Activated B cell treated with CpG ODN at 0.5 μM for 24 hours (primary cell): ENCODE measurements at regions of chr16 and their contacts with region 1.

Region 1: GRCh38 chr16:84511180-84511824 is 6.8 kb upstream of the MEAK7 start:
- DNase-seq: peak; percentile 80
- ATAC-seq: peak; percentile 26
- H3K4me3 Mint-ChIP-seq: peak overlapping the region; percentile 19
- H3K27ac Mint-ChIP-seq: peak overlapping the region; percentile 68
- H3K4me1 Mint-ChIP-seq: peaks cover 59% of the 10 kb centered on the region
- H3K27me3 Mint-ChIP-seq: no peaks in the 10 kb centered on the region
- CTCF ChIP-seq: peak; percentile 92

Region 2: GRCh38 chr16:84357191-84357651 is 154.1 kb before region 1 on chr16:
- CTCF ChIA-PET with region 1: no interaction called
- POLR2A ChIA-PET with region 1: no interaction called
- intact Hi-C with region 1: no loop called
- DNase-seq: no peak
- ATAC-seq: no peak
- H3K4me3 Mint-ChIP-seq: no peak overlapping the region
- H3K27ac Mint-ChIP-seq: no peak overlapping the region
- H3K4me1 Mint-ChIP-seq: no peaks in the 10 kb centered on the region
- H3K27me3 Mint-ChIP-seq: peaks cover 10% of the 10 kb centered on the region
- CTCF ChIP-seq: no peak

Region 3: GRCh38 chr16:84462261-84463210 is 48.8 kb before region 1 on chr16:
- CTCF ChIA-PET with region 1: no interaction called
- POLR2A ChIA-PET with region 1: no interaction called
- intact Hi-C with region 1: no loop called
- DNase-seq: no peak
- ATAC-seq: no peak
- H3K4me3 Mint-ChIP-seq: no peak overlapping the region
- H3K27ac Mint-ChIP-seq: no peak overlapping the region
- H3K4me1 Mint-ChIP-seq: no peaks in the 10 kb centered on the region
- H3K27me3 Mint-ChIP-seq: no peaks in the 10 kb centered on the region
- CTCF ChIP-seq: no peak

Region 4: GRCh38 chr16:84555418-84556195 is 44.3 kb after region 1 on chr16:
- CTCF ChIA-PET with region 1: no interaction called
- POLR2A ChIA-PET with region 1: no interaction called
- intact Hi-C with region 1: loop called (anchors 2 kb)
- DNase-seq: no peak
- ATAC-seq: peak; percentile 37
- H3K4me3 Mint-ChIP-seq: no peak overlapping the region
- H3K27ac Mint-ChIP-seq: no peak overlapping the region
- H3K4me1 Mint-ChIP-seq: peaks cover 21% of the 10 kb centered on the region
- H3K27me3 Mint-ChIP-seq: no peaks in the 10 kb centered on the region
- CTCF ChIP-seq: no peak

Region 5: DNA sequence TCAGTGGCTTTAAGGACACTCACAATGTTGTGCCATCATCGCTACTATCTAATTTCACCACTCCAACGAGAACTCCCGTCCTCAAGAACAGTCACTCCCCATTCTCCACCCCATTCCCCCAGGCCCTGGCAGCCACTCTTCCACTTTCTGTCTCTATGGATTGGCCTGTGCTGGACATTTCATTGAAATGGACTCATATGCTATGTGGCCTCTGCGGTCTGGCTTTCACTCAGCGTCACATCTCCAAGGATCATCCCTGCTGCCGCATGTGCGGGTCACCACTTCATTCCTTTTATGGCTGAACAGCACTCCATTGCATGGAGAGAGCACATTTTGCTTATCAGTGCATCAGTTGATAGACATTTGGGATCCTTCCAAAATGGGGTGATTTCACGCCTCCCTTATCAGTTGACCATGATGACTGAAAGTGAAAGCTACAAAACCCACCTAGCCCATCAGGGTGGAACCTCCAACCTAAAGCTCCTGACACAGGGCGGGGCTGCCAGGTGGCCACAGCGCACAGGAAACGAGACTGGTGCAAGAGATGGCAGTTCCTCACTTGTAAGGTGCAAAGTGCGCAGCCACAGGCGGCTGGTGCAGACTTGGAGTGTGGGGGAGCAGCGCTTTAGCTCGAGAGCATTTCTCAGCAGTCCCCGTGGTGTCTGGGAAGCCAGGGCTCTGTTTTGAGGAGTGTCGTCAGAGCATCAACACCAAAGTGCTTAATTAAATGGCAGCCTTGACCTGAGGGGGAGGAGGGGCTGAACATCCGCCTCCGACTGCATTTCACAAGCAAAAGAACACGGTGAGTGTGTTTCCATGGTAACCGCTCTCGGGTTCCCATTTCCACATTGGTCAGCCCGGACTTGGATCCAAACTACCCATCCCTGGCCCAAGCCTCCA is 82.8 kb after region 1 on chr16:
- CTCF ChIA-PET with region 1: interaction called, 5 read pairs
- POLR2A ChIA-PET with region 1: interaction called, 82 read pairs
- intact Hi-C with region 1: no loop called
- DNase-seq: peak; percentile 65
- ATAC-seq: peak; percentile 82
- H3K4me3 Mint-ChIP-seq: peak overlapping the region; percentile 91
- H3K27ac Mint-ChIP-seq: peak overlapping the region; percentile 91
- H3K4me1 Mint-ChIP-seq: peaks cover 80% of the 10 kb centered on the region
- H3K27me3 Mint-ChIP-seq: no peaks in the 10 kb centered on the region
- CTCF ChIP-seq: no peak

Region 6: GRCh38 chr16:84647828-84648594 is 136.7 kb after region 1 on chr16 and contains the start of gene KLHL36:
- CTCF ChIA-PET with region 1: no interaction called
- POLR2A ChIA-PET with region 1: interaction called, 12 read pairs
- intact Hi-C with region 1: no loop called
- DNase-seq: peak; percentile 87
- ATAC-seq: peak; percentile 91
- H3K4me3 Mint-ChIP-seq: peak within 1 kb of the TSS; percentile 87
- H3K27ac Mint-ChIP-seq: peak within 1 kb of the TSS; percentile 90
- H3K4me1 Mint-ChIP-seq: peaks cover 50% of the 10 kb centered on the region
- H3K27me3 Mint-ChIP-seq: no peaks in the 10 kb centered on the region
- CTCF ChIP-seq: no peak
- total RNA-seq, gene KLHL36: 62.6 and 72.7 TPM in 2 replicates

Region 7: GRCh38 chr16:84738255-84739038 is 227.1 kb after region 1 on chr16:
- CTCF ChIA-PET with region 1: interaction called, 12 read pairs
- POLR2A ChIA-PET with region 1: interaction called, 3 read pairs
- intact Hi-C with region 1: loop called (anchors 1 kb)
- DNase-seq: peak; percentile 57
- ATAC-seq: peak; percentile 92
- H3K4me3 Mint-ChIP-seq: no peak overlapping the region
- H3K27ac Mint-ChIP-seq: peak overlapping the region; percentile 68
- H3K4me1 Mint-ChIP-seq: peaks cover 39% of the 10 kb centered on the region
- H3K27me3 Mint-ChIP-seq: no peaks in the 10 kb centered on the region
- CTCF ChIP-seq: peak; percentile 80